Activated CD4-positive, alpha-beta memory T cell treated with anti-CD3 and anti-CD28 coated beads for 36 hours (primary cell): ENCODE measurements at regions of chr15 and their contacts with region 1.

Region 1: DNA sequence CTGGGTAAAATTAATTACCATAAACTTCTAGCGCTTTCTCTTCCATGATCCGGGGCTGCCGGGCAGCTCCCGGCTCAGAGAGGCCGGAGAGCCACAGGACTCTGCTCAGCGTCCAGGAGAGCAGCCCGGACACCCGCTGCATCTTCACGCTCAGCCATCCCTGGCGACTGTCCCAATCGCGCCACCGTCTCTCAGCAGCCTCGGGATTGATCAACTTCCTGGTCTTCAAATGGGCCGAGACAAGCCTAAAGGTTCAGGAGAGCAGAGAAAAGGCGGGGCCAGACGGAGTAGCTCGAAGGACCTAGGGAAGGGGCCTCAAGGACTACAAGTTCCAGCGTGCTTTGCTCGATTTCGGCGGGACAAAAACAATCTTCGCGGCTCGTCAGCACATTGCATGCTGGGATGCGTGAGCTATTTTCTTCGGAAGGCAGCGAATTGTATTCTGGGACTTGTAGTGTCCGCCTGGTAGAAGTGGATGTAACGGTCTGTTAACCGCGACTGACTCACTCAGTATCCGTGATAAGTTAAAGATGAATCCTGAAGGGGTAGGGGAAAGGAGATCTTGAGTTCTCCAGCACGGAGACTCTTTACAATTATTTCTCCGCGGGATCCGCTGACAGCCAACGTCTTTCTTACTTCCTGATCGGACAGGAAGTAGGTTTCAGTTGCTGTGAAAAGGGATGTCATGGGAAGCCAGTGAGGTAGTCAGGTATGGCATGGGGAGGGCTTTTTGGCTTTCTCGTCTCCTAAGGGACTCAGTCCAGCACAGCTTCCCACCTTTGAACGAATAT is at the start of gene CIAO2A:
- DNase-seq: peak; percentile 98
- H3K4me3 Mint-ChIP-seq: peak within 1 kb of the TSS; percentile 99
- H3K27ac Mint-ChIP-seq: peak within 1 kb of the TSS; percentile 97
- H3K4me1 Mint-ChIP-seq: peaks cover 62% of the 10 kb centered on the region
- H3K27me3 Mint-ChIP-seq: no peaks in the 10 kb centered on the region
- total RNA-seq, gene CIAO2A: 95.4 to 97.4 TPM

Region 2: DNA sequence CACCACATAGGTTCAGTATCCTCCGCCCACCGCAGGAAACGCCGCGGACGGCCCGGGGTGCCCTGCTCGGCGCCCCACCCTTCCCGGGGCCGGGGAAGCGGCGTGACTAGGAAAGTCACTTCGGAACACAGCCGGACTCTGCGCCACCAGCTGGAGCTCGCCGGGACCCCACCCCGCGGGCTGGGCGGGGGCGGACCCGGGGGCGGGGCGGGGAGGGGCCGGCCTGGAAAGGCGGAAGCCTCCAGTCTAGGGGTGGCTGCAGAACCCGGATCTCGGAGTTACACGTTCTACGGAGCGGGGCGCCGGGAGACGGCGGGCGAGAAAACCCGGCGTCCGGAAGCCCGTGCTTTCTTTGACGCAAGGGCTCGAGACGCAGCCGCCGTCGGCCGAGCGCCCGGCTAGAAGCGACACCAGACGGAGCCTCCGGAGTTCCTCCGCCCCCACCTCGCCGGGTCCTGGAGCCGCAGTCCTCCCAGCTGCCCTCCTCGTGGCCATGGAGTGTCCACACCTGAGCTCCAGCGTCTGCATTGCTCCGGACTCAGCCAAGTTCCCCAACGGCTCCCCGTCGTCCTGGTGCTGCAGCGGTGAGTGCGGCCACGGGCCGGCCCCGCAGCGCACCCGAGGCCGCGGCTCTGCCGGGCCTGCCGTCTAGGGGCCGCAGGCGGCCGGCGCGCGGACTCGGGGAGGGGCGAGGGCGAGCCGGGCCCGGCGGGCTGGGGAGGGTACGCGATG is 589.4 kb before region 1 on chr15 and contains the start of gene USP3:
- CTCF ChIA-PET with region 1: no interaction called
- POLR2A ChIA-PET with region 1: interaction called, 3 read pairs
- intact Hi-C with region 1: loop called (anchors 2 kb)
- DNase-seq: peak; percentile 95
- H3K4me3 Mint-ChIP-seq: peak within 1 kb of the TSS; percentile 90
- H3K27ac Mint-ChIP-seq: peak within 1 kb of the TSS; percentile 99
- H3K4me1 Mint-ChIP-seq: peaks cover 80% of the 10 kb centered on the region
- H3K27me3 Mint-ChIP-seq: no peaks in the 10 kb centered on the region
- total RNA-seq, gene USP3: 46.1 to 48.9 TPM

Region 3: DNA sequence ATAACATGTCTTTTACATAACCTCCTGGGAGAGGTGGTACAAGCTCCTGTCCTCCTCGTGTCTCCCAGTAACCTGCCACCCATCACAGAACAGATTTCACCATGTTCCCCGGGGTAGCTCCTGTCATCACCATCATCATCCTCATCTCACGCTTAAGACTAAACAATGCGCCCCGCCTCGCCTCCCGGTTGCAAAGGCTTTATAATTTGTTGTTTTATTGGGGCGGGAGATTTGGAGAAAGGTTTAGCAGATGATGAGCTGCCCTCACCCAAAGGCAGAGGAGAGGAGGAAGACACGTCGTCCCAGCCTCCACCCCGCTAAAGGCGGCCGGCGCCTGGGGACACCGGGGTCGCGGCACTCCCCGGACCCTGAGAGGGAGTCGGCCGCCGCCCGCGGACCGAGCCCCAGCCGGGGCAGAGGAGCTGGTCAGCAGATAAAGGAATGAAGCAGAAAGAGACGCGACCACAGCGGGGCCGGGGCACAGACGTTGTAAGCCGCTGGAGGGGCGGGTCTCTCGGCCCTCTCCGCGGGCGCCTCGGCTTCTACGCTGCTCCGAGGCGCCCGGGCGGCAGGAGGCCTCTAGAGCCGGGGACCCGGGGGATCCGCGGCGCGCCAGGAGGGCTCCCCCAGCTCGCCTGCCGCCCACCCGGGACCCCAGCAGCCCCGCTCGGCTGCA is 260.7 kb before region 1 on chr15:
- CTCF ChIA-PET with region 1: no interaction called
- POLR2A ChIA-PET with region 1: interaction called, 6 read pairs
- intact Hi-C with region 1: loop called (anchors 1 kb)
- DNase-seq: peak; percentile 46
- H3K4me3 Mint-ChIP-seq: peak overlapping the region; percentile 96
- H3K27ac Mint-ChIP-seq: peak overlapping the region; percentile 66
- H3K4me1 Mint-ChIP-seq: peaks cover 44% of the 10 kb centered on the region
- H3K27me3 Mint-ChIP-seq: no peaks in the 10 kb centered on the region

Region 4: GRCh38 chr15:63872759-63873510 is 220.9 kb before region 1 on chr15:
- CTCF ChIA-PET with region 1: no interaction called
- POLR2A ChIA-PET with region 1: no interaction called
- intact Hi-C with region 1: no loop called
- DNase-seq: no peak
- H3K4me3 Mint-ChIP-seq: no peak overlapping the region
- H3K27ac Mint-ChIP-seq: no peak overlapping the region
- H3K4me1 Mint-ChIP-seq: peaks cover 12% of the 10 kb centered on the region
- H3K27me3 Mint-ChIP-seq: no peaks in the 10 kb centered on the region

Region 5: GRCh38 chr15:64082757-64083156 is 11.1 kb before region 1 on chr15:
- CTCF ChIA-PET with region 1: no interaction called
- POLR2A ChIA-PET with region 1: no interaction called
- intact Hi-C with region 1: no loop called
- DNase-seq: no peak
- H3K4me3 Mint-ChIP-seq: no peak overlapping the region
- H3K27ac Mint-ChIP-seq: no peak overlapping the region
- H3K4me1 Mint-ChIP-seq: no peaks in the 10 kb centered on the region
- H3K27me3 Mint-ChIP-seq: no peaks in the 10 kb centered on the region

Region 6: GRCh38 chr15:64112904-64113303 is 19.1 kb after region 1 on chr15:
- CTCF ChIA-PET with region 1: no interaction called
- POLR2A ChIA-PET with region 1: interaction called, 7 read pairs
- intact Hi-C with region 1: loop called (anchors 2 kb)
- DNase-seq: peak; percentile 28
- H3K4me3 Mint-ChIP-seq: no peak overlapping the region
- H3K27ac Mint-ChIP-seq: peak overlapping the region; percentile 76
- H3K4me1 Mint-ChIP-seq: peaks cover 38% of the 10 kb centered on the region
- H3K27me3 Mint-ChIP-seq: no peaks in the 10 kb centered on the region

Region 7: GRCh38 chr15:64137226-64138220 is 43.7 kb after region 1 on chr15:
- CTCF ChIA-PET with region 1: no interaction called
- POLR2A ChIA-PET with region 1: no interaction called
- intact Hi-C with region 1: no loop called
- DNase-seq: no peak
- H3K4me3 Mint-ChIP-seq: no peak overlapping the region
- H3K27ac Mint-ChIP-seq: no peak overlapping the region
- H3K4me1 Mint-ChIP-seq: no peaks in the 10 kb centered on the region
- H3K27me3 Mint-ChIP-seq: no peaks in the 10 kb centered on the region

Region 8: GRCh38 chr15:64162870-64163658 is 69.2 kb after region 1 on chr15 and contains the start of gene PPIB:
- CTCF ChIA-PET with region 1: interaction called, 3 read pairs
- POLR2A ChIA-PET with region 1: interaction called, 8 read pairs
- intact Hi-C with region 1: loop called (anchors 1 kb)
- DNase-seq: peak; percentile 98
- H3K4me3 Mint-ChIP-seq: peak within 1 kb of the TSS; percentile 88
- H3K27ac Mint-ChIP-seq: peak within 1 kb of the TSS; percentile 94
- H3K4me1 Mint-ChIP-seq: peaks cover 43% of the 10 kb centered on the region
- H3K27me3 Mint-ChIP-seq: no peaks in the 10 kb centered on the region
- total RNA-seq, gene PPIB: 277 to 283 TPM

Region 9: DNA sequence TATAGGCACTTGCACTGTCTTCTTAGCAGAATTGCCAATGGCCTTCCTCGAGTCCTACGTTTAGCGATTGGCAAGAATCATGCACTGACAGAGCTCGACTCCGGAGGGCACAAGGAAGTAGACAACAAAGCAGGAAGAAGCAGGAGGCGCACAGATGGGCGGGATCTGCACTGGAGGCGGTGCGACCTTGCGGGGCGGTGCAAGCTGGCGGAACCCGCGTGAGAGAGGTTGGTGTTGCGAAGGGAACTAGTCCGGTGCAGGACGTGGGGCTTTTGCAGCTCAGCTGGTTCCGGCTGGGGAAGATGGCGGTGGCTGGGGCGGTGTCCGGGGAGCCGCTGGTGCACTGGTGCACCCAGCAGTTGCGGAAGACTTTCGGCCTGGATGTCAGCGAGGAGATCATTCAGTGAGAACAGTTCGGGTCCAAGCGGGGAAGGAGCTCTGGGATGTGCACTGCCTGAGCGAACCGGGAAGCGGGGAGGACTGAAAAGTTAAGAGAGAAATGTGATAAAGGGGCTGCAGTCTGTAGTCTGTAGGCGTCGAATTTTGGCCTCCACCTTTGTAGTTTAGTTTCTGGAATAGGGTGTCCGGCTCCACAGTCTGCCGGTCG is 293.8 kb after region 1 on chr15 and contains the start of gene TRIP4:
- CTCF ChIA-PET with region 1: no interaction called
- POLR2A ChIA-PET with region 1: no interaction called
- intact Hi-C with region 1: loop called (anchors 10 kb)
- DNase-seq: peak; percentile 98
- H3K4me3 Mint-ChIP-seq: peak within 1 kb of the TSS; percentile 97
- H3K27ac Mint-ChIP-seq: peak within 1 kb of the TSS; percentile 85
- H3K4me1 Mint-ChIP-seq: peaks cover 16% of the 10 kb centered on the region
- H3K27me3 Mint-ChIP-seq: no peaks in the 10 kb centered on the region
- total RNA-seq, gene TRIP4: 21.7 to 22.2 TPM

Region 10: DNA sequence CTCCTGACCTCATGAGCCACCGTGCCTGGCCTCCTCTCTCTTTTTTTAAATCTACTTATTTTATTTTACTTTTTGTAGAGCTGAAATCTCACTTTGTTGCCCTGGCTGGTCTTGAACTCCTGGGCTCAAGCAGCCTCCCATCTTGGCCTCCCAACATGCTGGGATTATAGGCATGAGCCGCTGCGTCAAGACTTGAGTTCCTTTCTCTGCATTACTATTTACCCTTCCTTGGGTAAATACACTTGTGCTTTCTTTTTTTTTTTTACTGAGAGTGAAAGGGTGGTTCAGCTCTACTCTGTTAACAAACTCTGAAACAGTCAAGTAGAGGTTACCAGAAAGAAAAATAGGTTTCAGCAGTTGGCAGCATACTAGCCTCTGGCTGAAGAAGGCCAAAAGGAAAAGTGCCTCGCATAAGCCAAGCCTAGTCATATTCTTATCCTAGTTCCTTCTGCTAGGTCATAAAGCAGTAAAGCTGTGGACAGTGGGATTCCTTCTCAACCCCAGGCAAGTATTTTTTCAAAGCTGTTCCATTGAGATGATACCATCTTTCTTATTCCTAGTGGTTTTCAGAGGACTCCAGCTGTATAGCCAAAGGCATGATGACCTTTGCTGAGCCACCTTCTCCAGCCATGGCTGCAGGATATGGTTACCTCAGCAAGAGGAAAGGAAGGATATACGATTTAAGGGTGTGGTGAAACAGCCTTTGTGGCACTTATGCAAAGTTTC is 546.5 kb after region 1 on chr15:
- CTCF ChIA-PET with region 1: no interaction called
- POLR2A ChIA-PET with region 1: no interaction called
- intact Hi-C with region 1: no loop called
- DNase-seq: no peak
- H3K4me3 Mint-ChIP-seq: no peak overlapping the region
- H3K27ac Mint-ChIP-seq: peak overlapping the region; percentile 13
- H3K4me1 Mint-ChIP-seq: peaks cover 37% of the 10 kb centered on the region
- H3K27me3 Mint-ChIP-seq: no peaks in the 10 kb centered on the region